ENCODE measurements at regions of chr6 and their contacts with region 1.

Region 1: GRCh38 chr6:32838114-32838958 is at the start of gene TAP2:
- DNase-seq: peak; percentile 98
- ATAC-seq: peak; percentile 82
- H3K4me3 Mint-ChIP-seq: peak within 1 kb of the TSS; percentile 94
- H3K27ac Mint-ChIP-seq: peak within 1 kb of the TSS; percentile 95
- H3K4me1 Mint-ChIP-seq: peaks cover 77% of the 10 kb centered on the region
- H3K27me3 Mint-ChIP-seq: no peaks in the 10 kb centered on the region
- total RNA-seq, gene TAP2: 242 to 258 TPM

Region 2: GRCh38 chr6:32825966-32826365 is 12.4 kb before region 1 on chr6:
- CTCF ChIA-PET with region 1: interaction called, 20 read pairs
- DNase-seq: no peak
- ATAC-seq: no peak
- H3K4me3 Mint-ChIP-seq: no peak overlapping the region
- H3K27ac Mint-ChIP-seq: no peak overlapping the region
- H3K4me1 Mint-ChIP-seq: peaks cover 29% of the 10 kb centered on the region
- H3K27me3 Mint-ChIP-seq: no peaks in the 10 kb centered on the region

Region 3: DNA sequence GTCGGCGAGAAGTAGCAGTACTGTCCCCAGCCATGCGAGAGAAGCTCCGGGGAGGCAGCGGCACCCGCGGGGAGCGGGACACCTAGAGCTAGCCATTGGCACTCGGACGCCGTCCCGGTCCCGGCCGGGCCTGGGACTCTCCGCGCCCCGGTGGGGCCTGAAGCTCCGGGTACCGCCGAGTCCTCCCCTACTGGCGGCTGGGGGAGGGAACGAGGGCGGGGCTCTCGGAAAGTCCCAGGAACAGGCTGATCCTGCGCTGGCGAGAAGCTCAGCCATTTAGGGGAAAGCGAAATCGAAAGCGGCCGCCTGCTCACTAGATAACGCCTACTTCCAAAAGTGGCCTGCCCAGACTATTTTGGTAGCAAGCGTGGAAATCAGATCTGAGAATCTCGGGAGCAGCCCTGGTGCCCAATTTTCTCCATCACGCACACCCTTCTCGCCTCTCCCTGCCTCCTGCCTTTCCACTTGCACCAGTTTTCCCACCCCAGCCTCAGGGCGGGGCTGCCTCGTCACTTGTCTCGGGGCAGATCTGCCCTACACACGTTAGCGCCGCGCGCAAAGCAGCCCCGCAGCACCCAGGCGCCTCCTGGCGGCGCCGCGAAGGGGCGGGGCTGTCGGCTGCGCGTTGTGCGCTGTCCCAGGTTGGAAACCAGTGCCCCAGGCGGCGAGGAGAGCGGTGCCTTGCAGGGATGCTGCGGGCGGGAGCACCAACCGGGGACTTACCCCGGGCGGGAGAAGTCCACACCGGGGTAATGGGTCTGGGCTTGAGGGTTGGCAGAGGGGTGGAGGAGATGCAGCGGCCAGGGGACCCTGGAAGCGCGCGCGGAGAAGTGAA is 15.4 kb after region 1 on chr6 and contains the starts of genes PSMB9 and TAP1:
- CTCF ChIA-PET with region 1: interaction called, 318 read pairs
- DNase-seq: peak; percentile 97
- ATAC-seq: peak; percentile 84
- H3K4me3 Mint-ChIP-seq: peak within 1 kb of the TSS; percentile 99
- H3K27ac Mint-ChIP-seq: peak within 1 kb of the TSS; percentile 100
- H3K4me1 Mint-ChIP-seq: peaks cover 61% of the 10 kb centered on the region
- H3K27me3 Mint-ChIP-seq: no peaks in the 10 kb centered on the region
- total RNA-seq, gene PSMB9: 402 to 473 TPM
- total RNA-seq, gene TAP1: 407 to 417 TPM

Region 4: DNA sequence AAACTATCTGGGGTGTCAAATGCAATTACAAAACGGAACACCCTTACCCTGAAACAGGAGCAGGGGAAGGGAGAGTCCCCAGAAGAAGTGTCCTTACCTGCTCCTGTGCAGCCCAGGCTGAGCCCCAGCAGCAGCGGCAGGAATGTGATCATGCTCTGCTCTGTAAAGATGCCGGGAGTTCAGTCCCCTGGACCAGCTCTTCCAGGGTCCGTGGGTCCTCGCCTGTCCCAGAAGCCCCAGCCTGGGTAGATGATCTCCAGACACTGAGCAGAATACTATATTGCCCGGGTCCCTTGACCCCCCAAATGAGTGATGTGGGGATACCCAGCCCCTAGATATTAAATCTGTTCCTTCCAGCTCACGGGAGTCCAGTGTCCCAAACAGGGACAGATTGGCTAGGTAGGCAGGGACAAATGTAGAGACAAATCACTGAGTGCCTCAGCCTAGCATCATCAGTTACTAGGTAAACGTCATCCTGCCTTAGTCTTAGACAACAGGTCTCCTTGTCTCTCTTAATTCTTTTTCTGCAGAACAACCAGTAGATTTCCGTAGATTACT is 102.4 kb after region 1 on chr6 and contains the start of gene HLA-DMB:
- CTCF ChIA-PET with region 1: interaction called, 12 read pairs
- DNase-seq: peak; percentile 80
- ATAC-seq: peak; percentile 94
- H3K4me3 Mint-ChIP-seq: peak within 1 kb of the TSS; percentile 87
- H3K27ac Mint-ChIP-seq: peak within 1 kb of the TSS; percentile 98
- H3K4me1 Mint-ChIP-seq: peaks cover 67% of the 10 kb centered on the region
- H3K27me3 Mint-ChIP-seq: no peaks in the 10 kb centered on the region
- total RNA-seq, gene HLA-DMB: 22.7 to 31.2 TPM

Region 5: GRCh38 chr6:32947552-32948465 is 109.5 kb after region 1 on chr6:
- CTCF ChIA-PET with region 1: interaction called, 18 read pairs
- DNase-seq: peak; percentile 57
- ATAC-seq: no peak
- H3K4me3 Mint-ChIP-seq: no peak overlapping the region
- H3K27ac Mint-ChIP-seq: no peak overlapping the region
- H3K4me1 Mint-ChIP-seq: peaks cover 63% of the 10 kb centered on the region
- H3K27me3 Mint-ChIP-seq: no peaks in the 10 kb centered on the region

Region 6: DNA sequence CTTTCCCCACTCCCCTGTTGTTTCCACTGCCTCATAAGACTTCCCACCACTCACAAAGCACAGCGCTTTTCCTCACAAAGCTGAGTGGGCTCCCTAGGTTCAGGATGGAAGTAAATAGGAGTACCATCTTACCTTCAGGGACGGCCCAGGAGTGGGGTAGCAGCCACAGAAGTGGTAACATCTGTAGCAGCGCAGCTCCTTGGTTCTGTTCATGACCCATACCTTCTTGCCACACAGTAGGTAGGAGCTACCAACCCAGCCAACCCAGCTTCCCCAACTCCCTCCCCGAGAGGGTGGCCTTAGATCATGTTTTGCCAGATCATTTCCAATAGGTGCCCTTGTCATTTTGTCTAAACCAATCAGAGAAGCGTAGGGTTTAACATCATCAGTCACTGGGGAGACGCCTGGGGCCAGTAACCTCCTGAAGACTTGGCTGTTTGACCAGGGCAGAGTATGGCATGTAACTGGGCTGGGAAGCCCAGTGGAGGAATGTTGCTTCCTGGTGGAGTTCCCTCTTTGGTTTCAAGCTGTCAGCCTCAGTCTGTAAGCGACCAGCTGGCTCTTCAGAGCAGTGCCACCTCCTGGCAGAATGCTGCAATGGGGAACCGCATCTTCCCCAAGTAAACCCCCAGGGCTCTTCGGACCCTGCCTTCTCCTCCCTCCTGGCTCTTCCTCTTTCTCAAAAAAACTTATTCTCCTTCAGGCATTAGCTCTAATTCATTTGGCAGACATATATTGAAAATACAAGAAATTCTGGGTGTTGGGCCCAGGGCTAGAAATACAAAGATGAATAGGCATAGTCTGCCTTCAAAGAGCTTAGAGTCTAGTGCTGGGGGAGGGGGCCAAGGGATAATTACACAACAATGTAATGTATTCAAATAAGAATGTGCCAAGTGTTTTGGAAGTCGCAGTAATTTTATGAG is 114.7 kb after region 1 on chr6 and contains the start of gene HLA-DMA:
- CTCF ChIA-PET with region 1: interaction called, 18 read pairs
- DNase-seq: peak; percentile 88
- ATAC-seq: peak; percentile 98
- H3K4me3 Mint-ChIP-seq: peak within 1 kb of the TSS; percentile 79
- H3K27ac Mint-ChIP-seq: peak within 1 kb of the TSS; percentile 86
- H3K4me1 Mint-ChIP-seq: peaks cover 59% of the 10 kb centered on the region
- H3K27me3 Mint-ChIP-seq: no peaks in the 10 kb centered on the region
- total RNA-seq, gene HLA-DMA: 57.9 to 60.9 TPM

Measured in activated CD8-positive, alpha-beta memory T cell treated with anti-CD3 and anti-CD28 coated beads, Interleukin-2, amount 10 ng/mL, durations not matched to agents 7 days and 5 days (primary cell).